HepG2 (cell line): ENCODE measurements at regions of chr5 and their contacts with region 1.

Region 1: DNA sequence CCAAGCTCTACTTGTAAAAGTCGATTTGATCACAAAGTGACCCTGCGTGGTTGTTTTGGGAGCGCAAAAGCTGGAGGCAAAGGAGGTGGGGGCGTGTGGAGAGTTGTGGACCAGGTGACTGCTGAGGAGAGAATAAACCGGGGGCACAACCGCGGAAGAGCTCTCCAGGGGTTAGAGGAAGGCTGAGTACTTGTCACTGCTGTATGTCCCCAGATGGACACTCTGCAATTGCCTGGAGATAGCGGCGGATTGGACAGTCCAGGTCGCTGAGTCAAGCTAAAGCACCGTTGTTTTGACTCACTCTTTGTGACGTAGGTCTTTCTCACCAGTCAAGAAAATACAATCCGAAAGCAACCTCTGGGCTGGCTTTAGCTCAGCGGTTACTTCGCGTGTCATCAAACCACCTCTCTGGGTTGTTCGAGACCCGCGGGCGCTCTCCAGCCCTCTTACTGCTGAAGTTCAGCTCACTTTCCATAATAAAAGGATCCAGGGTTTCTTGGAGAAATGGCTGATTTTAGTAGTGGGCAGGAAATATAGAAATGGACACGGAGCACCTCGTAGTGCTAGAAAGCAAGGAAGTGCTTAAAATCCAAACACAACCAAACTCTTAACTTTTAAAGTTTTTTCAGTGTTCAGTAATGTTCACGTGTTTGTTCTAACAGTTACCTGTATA is 25.7 kb downstream of the ZMAT2 start:
- DNase-seq: peak; percentile 92
- ATAC-seq: peak; percentile 97
- H3K4me3 ChIP-seq: peak overlapping the region; percentile 64 to 74 (median 68)
- H3K27ac ChIP-seq: peak overlapping the region; percentile 33
- H3K4me1 ChIP-seq: peaks cover 22% of the 10 kb centered on the region
- H3K27me3 ChIP-seq: no peaks in the 10 kb centered on the region
- CTCF ChIP-seq: no peak
- EP300 ChIP-seq: peak in 1 of 2 experiments; percentile 23; a peak in 1 of 4 replicates
- POLR2A ChIP-seq: no peak
- RAD21 ChIP-seq: peak; percentile 8; the same call in 1 of the 2 replicates

Region 2: GRCh38 chr5:140547508-140548299 is 178.2 kb before region 1 on chr5 and contains the start of gene EIF4EBP3:
- CTCF ChIA-PET with region 1: no interaction called
- POLR2A ChIA-PET with region 1: interaction called, 5 read pairs
- in situ Hi-C with region 1: no loop called
- intact Hi-C with region 1: loop called (anchors 5 kb)
- DNase-seq: peak; percentile 94
- ATAC-seq: peak; percentile 94
- H3K4me3 ChIP-seq: peak within 1 kb of the TSS; percentile 21 to 69 (median 48); a peak in 5 of 6 replicates
- H3K27ac ChIP-seq: peak within 1 kb of the TSS; percentile 86
- H3K4me1 ChIP-seq: peaks cover 27% of the 10 kb centered on the region
- H3K27me3 ChIP-seq: no peaks in the 10 kb centered on the region
- CTCF ChIP-seq: peak; percentile 62
- EP300 ChIP-seq: no peak
- POLR2A ChIP-seq: peak; percentile 3 to 58
- RAD21 ChIP-seq: peak; percentile 73
- total RNA-seq, gene EIF4EBP3: 1.7 and 1.9 TPM in 2 replicates

Region 3: DNA sequence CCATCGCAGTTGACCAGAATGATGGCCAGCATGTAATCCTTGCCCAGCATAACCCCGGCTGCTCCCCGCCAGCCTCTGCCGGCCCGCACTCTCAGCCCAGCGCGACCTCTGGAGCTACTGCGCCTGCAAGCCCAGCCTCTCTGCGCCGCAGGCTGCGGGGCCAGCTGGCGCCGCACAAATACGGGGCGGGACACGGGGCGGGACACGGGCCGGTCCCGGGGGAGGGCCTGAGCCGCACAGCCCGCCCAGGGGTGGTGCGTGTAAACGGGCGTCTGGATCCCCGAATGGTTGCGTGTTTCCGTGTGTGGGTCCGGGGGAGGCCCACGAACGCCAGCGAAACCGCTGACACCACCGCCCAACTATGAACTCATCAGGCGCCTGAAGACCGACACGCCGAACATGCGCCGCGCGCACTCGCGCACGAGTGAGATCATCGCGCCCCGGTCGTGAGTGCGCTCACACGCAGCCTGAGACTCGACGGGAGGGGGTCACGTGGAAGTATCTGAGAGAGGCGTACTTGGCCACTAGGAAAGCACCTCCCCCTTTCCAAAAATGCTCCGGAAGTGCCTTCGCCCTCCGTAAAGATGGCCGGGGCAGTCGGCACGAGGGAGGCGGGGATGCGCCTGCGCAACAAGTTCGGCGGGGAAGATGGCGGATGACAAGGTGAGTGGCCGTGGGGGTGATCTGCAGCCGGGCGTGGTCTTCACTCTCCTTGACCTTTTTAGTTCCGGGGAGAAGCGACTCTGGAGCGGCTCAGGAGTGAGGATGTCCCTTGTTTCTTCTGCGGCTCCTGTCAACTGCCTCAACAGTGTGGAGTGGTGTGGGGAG is 161.5 kb before region 1 on chr5 and contains the starts of genes APBB3 and SLC35A4:
- CTCF ChIA-PET with region 1: no interaction called
- POLR2A ChIA-PET with region 1: interaction called, 5 read pairs
- in situ Hi-C with region 1: loop called (anchors 10 kb)
- intact Hi-C with region 1: no loop called
- DNase-seq: peak; percentile 27
- ATAC-seq: peak; percentile 88
- H3K4me3 ChIP-seq: peak within 1 kb of the TSS; percentile 43 to 70 (median 46)
- H3K27ac ChIP-seq: no peak within 1 kb of the TSS
- H3K4me1 ChIP-seq: peaks cover 18% of the 10 kb centered on the region
- H3K27me3 ChIP-seq: peaks cover 0 to 5% of the 10 kb centered on the region in 2 experiments; a peak in 1 of 5 replicates
- CTCF ChIP-seq: peak; percentile 22; the same call in 1 of the 2 replicates
- EP300 ChIP-seq: no peak
- POLR2A ChIP-seq: 0 out of 4 replicates have a peak, but pooled peaks have one; percentile 11 to 24
- RAD21 ChIP-seq: no peak
- total RNA-seq, gene APBB3: 0.22 and 0.38 TPM in 2 replicates
- total RNA-seq, gene SLC35A4: 0.71 and 0.95 TPM in 2 replicates